GM10248 (cell line): ENCODE measurements at regions of chr6 and their contacts with region 1.

Region 1: GRCh38 chr6:152267967-152268845 is 369.0 kb downstream of the SYNE1 start:
- DNase-seq: peak; percentile 16
- CTCF ChIP-seq: peak; percentile 52

Region 2: DNA sequence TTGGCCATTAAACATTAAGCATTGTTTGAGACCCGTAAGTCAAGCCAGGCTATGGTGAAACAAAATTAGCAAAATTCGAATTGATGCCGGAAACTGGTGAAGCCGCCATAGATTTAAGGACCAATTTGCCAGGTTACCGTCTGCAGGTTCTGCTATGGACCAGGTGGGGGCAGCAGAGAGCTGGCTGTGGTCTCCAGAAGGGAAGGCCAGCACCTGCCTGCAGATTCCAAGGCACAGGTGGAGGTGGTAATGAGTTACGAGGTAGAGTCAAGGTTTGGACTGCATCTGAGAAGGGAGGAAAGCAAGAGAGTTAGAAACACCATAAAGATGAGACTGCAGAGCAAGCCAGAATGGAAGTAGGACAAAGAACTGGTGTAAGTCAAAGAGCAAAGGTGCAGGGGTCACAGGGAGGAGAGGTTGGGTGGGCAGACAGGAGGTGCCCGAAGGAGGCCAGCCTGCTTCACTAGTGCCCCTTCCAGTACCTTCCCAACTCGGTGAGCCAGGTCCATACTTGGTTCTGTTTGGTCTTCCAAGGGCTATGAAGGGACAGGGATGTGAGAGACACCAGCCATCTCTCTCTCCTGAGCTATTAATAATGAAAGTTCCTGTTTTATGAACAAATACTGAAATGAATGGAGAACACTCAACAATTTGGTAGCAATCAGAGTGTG is 592.3 kb before region 1 on chr6:
- CTCF ChIA-PET with region 1: interaction called, 12 read pairs
- POLR2A ChIA-PET with region 1: no interaction called
- DNase-seq: peak; percentile 69
- CTCF ChIP-seq: peak; percentile 79

Region 3: GRCh38 chr6:151765444-151765886 is 502.7 kb before region 1 on chr6:
- CTCF ChIA-PET with region 1: interaction called, 12 read pairs
- POLR2A ChIA-PET with region 1: no interaction called
- DNase-seq: peak; percentile 62
- CTCF ChIP-seq: peak; percentile 56